ENCODE measurements at regions of chr3 and their contacts with region 1.

Region 1: GRCh38 chr3:122514123-122515019 is at the start of gene KPNA1:
- DNase-seq: peak; percentile 85 to 87
- ATAC-seq: peak; percentile 97 to 99 (median 97)
- H3K4me3 ChIP-seq: peak within 1 kb of the TSS; percentile 62 to 93 (median 86)
- H3K27ac ChIP-seq: peak within 1 kb of the TSS; percentile 78 to 99 (median 96)
- H3K4me1 ChIP-seq: peaks cover 0 to 35% (median 30%) of the 10 kb centered on the region in 9 donors
- H3K27me3 ChIP-seq: no peaks in the 10 kb centered on the region
- CTCF ChIP-seq: no peak
- total RNA-seq, gene KPNA1: 71.0 to 121 (median 86.9) TPM

Region 2: DNA sequence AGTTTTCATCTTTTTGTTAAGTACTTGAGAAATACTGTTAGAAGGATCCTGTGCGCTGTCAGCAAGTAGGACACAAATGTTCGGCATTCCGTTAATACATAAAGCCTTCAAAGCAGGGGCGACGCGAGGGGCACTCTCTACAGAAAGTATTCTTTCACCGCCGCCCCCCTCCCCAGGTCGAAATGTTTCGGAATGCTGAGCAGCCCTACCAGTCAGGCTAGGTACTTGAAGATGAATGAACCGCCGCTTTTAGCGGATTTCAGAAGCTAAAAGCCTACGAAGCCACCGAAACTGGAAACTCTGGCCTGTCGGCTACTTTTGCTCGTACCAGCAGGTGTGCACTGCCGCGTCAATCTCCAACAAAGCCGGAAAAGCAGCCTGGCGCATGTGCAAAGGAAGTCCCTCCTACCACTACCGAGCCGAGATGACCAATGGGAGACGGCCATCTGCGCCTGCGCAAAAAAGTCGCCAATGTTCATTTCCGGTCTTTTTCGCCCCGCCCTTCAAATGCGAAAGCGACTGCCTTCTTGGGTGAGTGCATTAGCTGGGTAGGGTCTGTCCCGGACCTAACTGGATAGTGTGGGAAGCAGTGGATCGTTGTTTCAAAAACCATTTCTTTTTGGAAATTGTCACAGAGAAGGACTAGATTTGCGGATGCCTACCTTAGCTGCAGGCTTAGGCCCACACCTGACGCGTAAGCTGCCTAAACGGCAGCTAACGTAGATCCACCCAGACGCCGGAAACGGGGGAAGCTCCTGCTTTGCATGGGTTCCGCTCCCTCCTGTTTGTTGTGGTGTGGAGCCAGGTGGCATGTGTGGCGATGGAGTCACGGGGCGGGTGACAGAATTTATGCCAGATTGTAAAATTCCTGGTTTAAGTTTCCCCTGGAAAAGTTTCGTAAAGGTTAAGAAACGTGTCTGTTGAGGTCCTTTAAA is 98.4 kb before region 1 on chr3 and contains the start of gene WDR5B:
- intact Hi-C with region 1: loop called in 2 of 10 experiments (anchors 5 kb)
- DNase-seq: peak; percentile 97 to 98
- ATAC-seq: peak; percentile 95 to 98 (median 97)
- H3K4me3 ChIP-seq: peak within 1 kb of the TSS; percentile 56 to 85 (median 69)
- H3K27ac ChIP-seq: peak within 1 kb of the TSS; percentile 54 to 91 (median 88)
- H3K4me1 ChIP-seq: peaks cover 8 to 43% (median 27%) of the 10 kb centered on the region in 9 donors
- H3K27me3 ChIP-seq: no peaks in the 10 kb centered on the region
- CTCF ChIP-seq: peak in 3 of 9 donors; percentile 26 to 35 (median 28)
- total RNA-seq, gene WDR5B: 2.1 to 3.9 (median 2.9) TPM

Region 3: DNA sequence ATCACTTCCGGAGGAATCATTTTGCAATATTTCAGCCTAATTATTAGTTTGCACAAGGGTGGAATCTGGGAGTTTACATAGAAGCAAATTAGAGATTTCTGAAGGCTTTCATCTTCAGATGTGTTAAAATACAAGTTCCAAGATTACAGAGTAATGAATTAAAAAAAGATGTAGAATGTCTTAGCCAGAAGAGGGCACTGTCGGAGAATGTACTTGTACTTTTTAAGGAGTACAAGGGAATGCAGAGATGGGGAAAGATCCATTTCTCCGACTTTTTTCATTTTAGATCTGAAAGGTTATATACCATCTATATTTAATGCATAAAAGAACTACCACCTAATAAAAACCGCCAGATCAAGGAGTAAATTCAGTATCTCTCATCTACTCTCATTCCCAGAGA is 55.4 kb before region 1 on chr3:
- intact Hi-C with region 1: loop called in 1 of 10 experiments (anchors 10 kb)
- DNase-seq: peak in 1 of 2 donors; percentile 18
- ATAC-seq: no peak
- H3K4me3 ChIP-seq: no peak overlapping the region
- H3K27ac ChIP-seq: no peak overlapping the region
- H3K4me1 ChIP-seq: no peaks in the 10 kb centered on the region
- H3K27me3 ChIP-seq: no peaks in the 10 kb centered on the region
- CTCF ChIP-seq: peak in 8 of 9 donors; percentile 20 to 59 (median 46)

Region 4: GRCh38 chr3:122475316-122475715 is 39.1 kb before region 1 on chr3:
- intact Hi-C with region 1: loop called in 1 of 10 experiments (anchors 5 kb)
- DNase-seq: no peak
- ATAC-seq: no peak
- H3K4me3 ChIP-seq: no peak overlapping the region
- H3K27ac ChIP-seq: no peak overlapping the region
- H3K4me1 ChIP-seq: peaks cover 0 to 20% (median 6%) of the 10 kb centered on the region in 9 donors
- H3K27me3 ChIP-seq: no peaks in the 10 kb centered on the region
- CTCF ChIP-seq: no peak